OCI-LY7 (cell line): ENCODE measurements at regions of chr11 and their contacts with region 1.

Region 1: DNA sequence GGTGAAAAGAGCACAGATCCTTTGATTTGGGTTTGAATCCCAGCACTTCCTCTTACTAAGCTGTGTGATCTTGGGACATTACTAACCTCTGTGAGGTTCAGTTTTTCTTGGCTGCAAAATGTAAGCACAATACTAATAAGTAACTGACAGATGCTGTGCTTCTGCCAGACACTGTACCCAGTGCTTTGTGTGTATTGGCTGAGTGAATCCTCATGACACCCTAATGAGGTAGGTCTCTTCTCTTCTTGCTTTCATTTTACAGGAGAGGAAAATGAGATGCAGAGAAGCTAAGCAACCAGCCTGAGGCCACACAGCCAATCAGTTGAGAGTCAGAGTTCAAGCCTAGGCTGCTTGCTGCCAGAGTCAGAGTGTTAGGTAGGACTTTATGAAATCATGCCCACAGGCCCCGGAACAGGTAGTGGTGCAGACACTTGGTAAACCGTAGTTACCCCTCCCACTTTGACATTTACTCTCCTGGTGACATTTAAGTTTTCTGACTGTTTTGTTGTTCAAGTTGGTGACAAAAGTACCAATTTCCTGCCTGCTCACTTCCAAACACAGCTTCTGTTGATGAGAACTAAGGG is 21.2 kb downstream of the PTPRJ start:
- DNase-seq: peak; percentile 75
- H3K4me3 ChIP-seq: peak overlapping the region; percentile 45
- H3K27ac ChIP-seq: peak overlapping the region; percentile 85
- H3K4me1 ChIP-seq: peaks cover 91% of the 10 kb centered on the region
- CTCF ChIP-seq: no peak

Region 2: GRCh38 chr11:47758076-47758475 is 243.5 kb before region 1 on chr11:
- CTCF ChIA-PET with region 1: no interaction called
- POLR2A ChIA-PET with region 1: no interaction called
- intact Hi-C with region 1: no loop called
- DNase-seq: no peak
- H3K4me3 ChIP-seq: no peak overlapping the region
- H3K27ac ChIP-seq: no peak overlapping the region
- H3K4me1 ChIP-seq: no peaks in the 10 kb centered on the region
- CTCF ChIP-seq: no peak

Region 3: DNA sequence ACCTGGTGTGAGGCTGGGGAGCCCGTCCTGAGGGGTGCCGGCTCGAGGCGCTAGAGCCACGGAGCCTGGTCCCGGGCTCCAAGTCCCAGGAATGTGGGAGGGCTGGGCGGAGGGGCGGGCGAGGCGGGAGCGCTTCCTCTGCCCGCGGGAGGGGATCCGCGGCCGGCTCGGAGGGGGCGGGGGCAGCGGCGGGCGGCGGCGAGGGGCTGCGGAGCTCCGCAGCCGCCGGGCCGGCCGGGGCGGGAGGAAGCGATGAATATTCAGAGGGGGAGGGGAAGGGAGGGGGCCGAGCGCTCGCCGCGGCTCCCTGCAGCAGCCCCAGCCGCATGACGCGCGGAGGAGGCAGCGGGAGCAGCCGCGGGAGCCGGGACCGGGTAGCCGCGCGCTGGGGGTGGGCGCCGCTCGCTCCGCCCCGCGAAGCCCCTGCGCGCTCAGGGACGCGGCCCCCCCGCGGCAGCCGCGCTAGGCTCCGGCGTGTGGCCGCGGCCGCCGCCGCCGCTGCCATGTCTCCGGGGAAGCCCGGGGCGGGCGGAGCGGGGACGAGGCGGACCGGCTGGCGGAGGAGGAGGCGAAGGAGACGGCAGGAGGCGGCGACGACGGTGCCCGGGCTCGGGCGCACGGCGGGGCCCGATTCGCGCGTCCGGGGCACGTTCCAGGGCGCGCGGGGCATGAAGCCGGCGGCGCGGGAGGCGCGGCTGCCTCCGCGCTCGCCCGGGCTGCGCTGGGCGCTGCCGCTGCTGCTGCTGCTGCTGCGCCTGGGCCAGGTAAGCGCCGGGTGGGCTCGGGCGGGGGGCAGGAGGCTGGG is 21.1 kb before region 1 on chr11 and contains the start of gene PTPRJ:
- CTCF ChIA-PET with region 1: interaction called, 3 read pairs
- POLR2A ChIA-PET with region 1: interaction called, 10 read pairs
- intact Hi-C with region 1: no loop called
- DNase-seq: peak; percentile 65
- H3K4me3 ChIP-seq: peak within 1 kb of the TSS; percentile 82
- H3K27ac ChIP-seq: no peak within 1 kb of the TSS
- H3K4me1 ChIP-seq: peaks cover 38% of the 10 kb centered on the region
- CTCF ChIP-seq: no peak
- total RNA-seq, gene PTPRJ: 4.5 and 5.4 TPM in 2 replicates

Region 4: DNA sequence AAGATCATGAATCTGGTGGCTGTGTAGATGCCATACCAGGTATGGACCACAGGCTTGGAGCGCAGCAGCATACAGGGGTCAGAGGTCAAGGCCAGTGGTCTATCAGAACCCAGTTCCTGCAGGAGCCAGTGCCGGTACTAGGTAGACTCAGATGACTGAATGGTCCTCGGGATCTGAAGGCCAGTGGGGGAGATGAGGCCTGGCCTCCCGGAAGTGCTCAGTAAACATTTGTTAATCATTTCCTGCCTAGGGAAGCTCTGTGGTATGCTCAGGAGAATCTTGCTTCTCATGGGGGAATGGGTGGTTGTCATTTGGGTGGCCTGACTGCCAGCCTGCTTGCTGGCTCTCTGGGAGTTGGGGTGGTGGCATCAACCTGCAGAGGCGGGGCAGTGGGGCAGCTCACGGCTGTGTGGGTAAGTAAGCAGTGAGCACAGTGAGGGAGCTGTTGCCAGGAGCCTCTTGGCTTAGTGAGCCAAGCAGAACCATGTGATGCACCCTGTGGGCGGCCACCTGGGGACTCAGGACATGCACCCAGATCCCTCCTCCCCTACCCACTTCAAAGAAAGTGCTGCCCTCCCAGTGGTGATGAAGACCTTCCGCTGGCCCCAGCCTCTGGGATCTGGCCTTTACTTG is 11.9 kb after region 1 on chr11:
- CTCF ChIA-PET with region 1: interaction called, 9 read pairs
- POLR2A ChIA-PET with region 1: interaction called, 91 read pairs
- intact Hi-C with region 1: no loop called
- DNase-seq: peak; percentile 81
- H3K4me3 ChIP-seq: peak overlapping the region; percentile 8
- H3K27ac ChIP-seq: peak overlapping the region; percentile 55
- H3K4me1 ChIP-seq: peaks cover 77% of the 10 kb centered on the region
- CTCF ChIP-seq: no peak

Region 5: GRCh38 chr11:48034926-48035871 is 33.7 kb after region 1 on chr11:
- CTCF ChIA-PET with region 1: no interaction called
- POLR2A ChIA-PET with region 1: interaction called, 15 read pairs
- intact Hi-C with region 1: no loop called
- DNase-seq: no peak
- H3K4me3 ChIP-seq: no peak overlapping the region
- H3K27ac ChIP-seq: no peak overlapping the region
- H3K4me1 ChIP-seq: peaks cover 88% of the 10 kb centered on the region
- CTCF ChIP-seq: no peak

Region 6: DNA sequence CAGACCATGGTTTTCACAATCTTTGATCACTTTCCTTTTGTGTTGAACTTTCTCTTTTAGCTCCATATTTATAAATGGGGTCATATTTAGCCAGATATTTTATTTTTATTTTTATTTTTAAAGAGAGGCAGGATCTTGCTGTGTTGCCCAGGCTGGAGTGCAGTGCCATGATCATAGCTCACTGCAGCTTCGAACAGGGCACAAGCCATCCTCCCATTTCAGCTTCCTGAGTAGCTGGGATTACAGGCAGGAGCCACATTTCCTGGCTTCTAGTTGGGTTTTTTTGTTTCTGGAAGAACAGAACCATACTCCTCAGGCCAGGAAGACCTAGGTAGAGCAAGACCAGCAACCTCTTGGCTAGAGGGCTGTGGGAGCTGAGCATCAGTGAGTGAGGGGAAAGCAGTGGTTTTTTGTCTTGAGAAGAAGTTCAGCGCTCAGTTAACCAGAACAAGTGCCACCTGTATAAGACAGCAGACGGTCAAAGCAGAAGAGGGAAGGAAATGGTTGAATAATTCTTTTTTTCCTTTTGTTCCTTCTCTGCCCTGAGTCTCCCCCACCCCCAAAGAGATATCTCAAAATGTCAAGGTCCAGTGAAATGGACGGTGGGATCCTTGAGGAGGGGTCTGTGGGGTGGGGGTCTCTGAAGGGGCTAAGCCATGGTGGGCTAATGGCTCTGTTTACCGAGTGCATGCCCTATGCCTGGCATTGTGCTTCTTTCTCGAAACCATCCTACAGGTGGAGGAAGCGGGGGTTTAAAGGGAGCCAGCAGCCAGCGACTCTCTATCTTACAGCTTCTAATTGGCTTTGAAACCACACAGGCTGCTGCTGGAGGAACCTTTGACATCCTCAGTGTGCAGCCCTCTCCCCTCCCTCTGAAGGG is 41.8 kb after region 1 on chr11:
- CTCF ChIA-PET with region 1: no interaction called
- POLR2A ChIA-PET with region 1: interaction called, 6 read pairs
- intact Hi-C with region 1: loop called (anchors 1 kb)
- DNase-seq: peak; percentile 91
- H3K4me3 ChIP-seq: peak overlapping the region; percentile 50
- H3K27ac ChIP-seq: peak overlapping the region; percentile 92
- H3K4me1 ChIP-seq: peaks cover 82% of the 10 kb centered on the region
- CTCF ChIP-seq: no peak